Heart right ventricle (tissue), 16 donors: ENCODE measurements at regions of chrX and their contacts with region 1.

Region 1: DNA sequence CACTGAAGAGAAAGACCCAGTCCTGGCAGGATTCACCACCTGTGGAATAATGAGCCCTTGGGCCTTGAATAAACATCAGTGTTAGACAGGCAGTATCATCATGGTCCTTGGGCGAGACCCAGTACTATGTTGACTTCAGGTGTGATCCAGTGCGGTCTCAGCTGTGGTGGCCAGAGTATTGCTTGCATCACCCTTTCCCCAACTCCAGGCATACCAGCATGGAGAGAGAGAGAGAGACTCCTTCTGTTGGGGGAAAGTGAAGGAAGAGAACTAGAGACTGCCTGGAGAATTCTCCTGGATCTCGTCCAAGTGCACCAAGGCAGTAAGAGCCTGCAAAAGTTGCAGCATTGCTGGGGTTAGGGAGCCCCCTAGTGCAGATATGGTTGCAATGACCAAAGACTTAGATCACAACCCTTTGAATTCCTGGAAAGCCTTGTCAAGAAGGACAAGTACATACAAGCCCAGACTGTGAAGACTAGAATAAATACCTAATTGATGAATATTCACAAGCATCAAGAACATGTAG is 61.1 kb upstream of the VAMP7 start:
- DNase-seq: peak in 1 of 2 donors; percentile 78
- ATAC-seq: peak; percentile 72 to 86 (median 80)
- H3K4me3 ChIP-seq: no peak overlapping the region
- H3K27ac ChIP-seq: no peak overlapping the region
- H3K4me1 ChIP-seq: no peaks in the 10 kb centered on the region
- H3K27me3 ChIP-seq: peaks cover 0 to 6% (median 0%) of the 10 kb centered on the region in 7 donors
- CTCF ChIP-seq: peak; percentile 29 to 78 (median 72)

Region 2: DNA sequence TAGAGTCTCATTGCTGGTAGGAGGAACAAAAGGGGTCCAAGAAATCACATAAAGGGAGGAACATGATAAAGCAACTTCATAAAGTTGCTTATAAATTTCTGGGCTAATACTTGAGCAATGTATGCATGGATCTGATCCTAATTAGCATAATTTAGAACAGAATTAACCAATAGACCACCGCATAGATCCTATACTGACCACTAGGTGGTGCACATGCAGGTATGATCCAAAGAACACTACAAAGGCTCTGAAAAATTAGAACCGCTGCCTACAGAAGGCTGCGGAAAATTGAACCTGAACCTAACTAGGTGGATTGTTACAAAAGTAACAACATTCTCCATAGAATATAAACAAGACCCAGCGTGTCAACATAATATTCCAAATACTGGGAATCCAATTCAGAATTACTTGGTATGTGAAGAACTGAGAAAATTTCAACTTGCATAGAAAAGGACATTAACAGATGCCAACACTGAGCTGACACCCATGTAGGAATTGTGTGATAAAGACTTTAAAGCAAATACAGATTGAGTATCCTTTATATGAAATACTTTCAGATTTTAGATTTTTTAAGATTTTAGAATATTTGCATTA is 725.5 kb before region 1 on chrX:
- intact Hi-C with region 1: loop called in 6 of 10 experiments (anchors 5 to 10 kb)
- DNase-seq: no peak
- ATAC-seq: no peak
- H3K4me3 ChIP-seq: no peak overlapping the region
- H3K27ac ChIP-seq: no peak overlapping the region
- H3K4me1 ChIP-seq: no peaks in the 10 kb centered on the region
- H3K27me3 ChIP-seq: no peaks in the 10 kb centered on the region
- CTCF ChIP-seq: peak; percentile 23 to 65 (median 62)

Region 3: GRCh38 chrX:155662282-155662681 is 157.7 kb before region 1 on chrX:
- intact Hi-C with region 1: loop called in 1 of 10 experiments (anchors 5 kb)
- DNase-seq: no peak
- ATAC-seq: no peak
- H3K4me3 ChIP-seq: no peak overlapping the region
- H3K27ac ChIP-seq: no peak overlapping the region
- H3K4me1 ChIP-seq: no peaks in the 10 kb centered on the region
- H3K27me3 ChIP-seq: no peaks in the 10 kb centered on the region
- CTCF ChIP-seq: peak in 1 of 9 donors; percentile 13